PC-3 (cell line): ENCODE measurements at regions of chr2 and their contacts with region 1.

Region 1: DNA sequence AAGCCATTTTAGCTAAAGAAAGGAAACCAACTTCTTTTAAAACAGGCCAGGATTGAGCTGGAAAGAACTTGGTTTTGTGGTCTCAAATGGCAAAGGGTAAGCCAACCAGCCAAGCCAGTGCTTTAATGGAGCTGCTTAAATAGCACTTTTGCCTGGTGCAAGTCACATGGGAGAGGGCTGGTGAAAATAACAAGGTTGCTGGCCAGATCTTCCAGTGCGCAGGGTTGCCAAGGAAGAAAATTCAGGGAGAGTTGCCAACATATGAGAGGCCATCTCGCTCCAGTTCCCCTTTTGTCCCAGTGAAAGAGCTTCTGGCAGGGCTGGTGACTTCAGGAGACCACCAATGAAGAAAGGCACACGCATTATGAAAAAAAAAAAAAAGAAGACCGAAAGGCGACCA is 57.3 kb downstream of the IRS1 start:
- DNase-seq: no peak
- ATAC-seq: no peak
- H3K4me3 ChIP-seq: no peak overlapping the region
- H3K27ac ChIP-seq: no peak overlapping the region
- H3K4me1 ChIP-seq: no peaks in the 10 kb centered on the region
- H3K27me3 ChIP-seq: no peaks in the 10 kb centered on the region
- CTCF ChIP-seq: no peak

Region 2: GRCh38 chr2:226777611-226778010 is 35.3 kb after region 1 on chr2:
- CTCF ChIA-PET with region 1: no interaction called
- POLR2A ChIA-PET with region 1: no interaction called
- intact Hi-C with region 1: loop called (anchors 5 kb)
- DNase-seq: no peak
- ATAC-seq: no peak
- H3K4me3 ChIP-seq: no peak overlapping the region
- H3K27ac ChIP-seq: no peak overlapping the region
- H3K4me1 ChIP-seq: peaks cover 7% of the 10 kb centered on the region; the same call in 1 of the 2 replicates
- H3K27me3 ChIP-seq: no peaks in the 10 kb centered on the region
- CTCF ChIP-seq: no peak